CD8-positive, alpha-beta T cell (primary cell): ENCODE measurements at regions of chr11 and their contacts with region 1.

Region 1: DNA sequence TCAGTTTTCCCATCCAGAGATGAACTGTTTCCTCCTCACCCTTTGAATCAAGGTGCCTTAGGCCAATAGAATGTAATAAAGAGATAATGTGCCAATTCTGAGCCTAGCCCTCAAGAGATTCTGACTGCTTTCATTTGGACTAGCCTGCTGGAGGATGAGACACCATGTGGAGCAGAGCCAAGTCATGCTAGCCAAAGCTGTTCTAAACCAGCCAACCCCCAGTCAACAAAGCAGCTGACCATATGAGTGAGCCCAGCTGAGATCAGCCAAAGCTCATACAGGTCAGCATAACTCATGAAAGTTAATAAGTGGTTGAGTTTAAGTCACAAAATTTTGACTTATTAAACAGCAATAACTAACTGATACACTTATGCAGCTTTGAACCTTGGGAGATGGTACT is 66.7 kb upstream of the DBX1 start:
- DNase-seq: no peak
- ATAC-seq: no peak
- H3K4me3 ChIP-seq: no peak overlapping the region
- H3K4me3 Mint-ChIP-seq: no peak overlapping the region
- H3K27ac ChIP-seq: no peak overlapping the region
- H3K27ac Mint-ChIP-seq: no peak overlapping the region
- H3K4me1 ChIP-seq: no peaks in the 10 kb centered on the region
- H3K4me1 Mint-ChIP-seq: no peaks in the 10 kb centered on the region
- H3K27me3 ChIP-seq: no peaks in the 10 kb centered on the region
- H3K27me3 Mint-ChIP-seq: peaks cover 19% of the 10 kb centered on the region
- CTCF ChIP-seq: no peak

Region 2: DNA sequence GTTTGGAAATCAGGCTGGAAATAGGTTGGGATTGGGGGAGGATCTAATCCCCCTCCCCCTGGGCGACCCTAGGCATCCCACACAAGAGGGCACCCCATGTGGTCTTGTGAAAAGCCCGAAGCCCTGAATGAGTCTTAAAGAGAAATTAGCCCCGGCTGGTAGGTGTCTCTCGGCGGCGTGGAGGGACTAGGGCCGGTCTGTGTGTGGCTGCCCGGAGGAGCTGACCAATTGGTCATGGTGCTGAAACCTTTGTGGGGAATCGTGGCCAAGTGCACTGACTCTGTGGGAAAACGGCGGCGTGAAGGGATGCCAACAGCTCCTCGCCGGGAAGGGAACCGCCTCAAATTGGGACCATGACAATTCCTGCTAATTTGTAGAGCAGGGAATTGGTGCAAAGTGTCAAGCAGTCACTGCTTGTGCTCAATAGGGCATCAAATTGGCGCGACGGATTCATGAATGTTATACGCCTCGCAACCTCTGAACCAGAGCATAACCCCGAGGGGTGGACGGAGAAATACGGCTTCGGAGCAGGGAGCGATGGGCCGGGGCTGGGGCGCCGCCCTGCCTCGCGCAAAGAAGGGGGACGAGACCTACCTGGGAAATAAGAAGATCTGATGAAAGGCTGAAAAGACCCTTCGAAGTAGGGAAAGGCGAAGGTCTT is 68.2 kb before region 1 on chr11:
- CTCF ChIA-PET with region 1: no interaction called
- POLR2A ChIA-PET with region 1: no interaction called
- intact Hi-C with region 1: no loop called
- DNase-seq: peak in 1 of 9 experiments; percentile 11
- ATAC-seq: no peak
- H3K4me3 ChIP-seq: no peak overlapping the region
- H3K4me3 Mint-ChIP-seq: no peak overlapping the region
- H3K27ac ChIP-seq: no peak overlapping the region
- H3K27ac Mint-ChIP-seq: no peak overlapping the region
- H3K4me1 ChIP-seq: peaks cover 19% of the 10 kb centered on the region
- H3K4me1 Mint-ChIP-seq: peaks cover 34% of the 10 kb centered on the region
- H3K27me3 ChIP-seq: peaks cover 55 to 56% of the 10 kb centered on the region in 2 experiments
- H3K27me3 Mint-ChIP-seq: peaks cover 70% of the 10 kb centered on the region
- CTCF ChIP-seq: no peak

Region 3: GRCh38 chr11:20177136-20177535 is 49.8 kb before region 1 on chr11:
- CTCF ChIA-PET with region 1: no interaction called
- POLR2A ChIA-PET with region 1: no interaction called
- intact Hi-C with region 1: loop called in 1 of 2 experiments (anchors 10 kb)
- DNase-seq: no peak
- ATAC-seq: no peak
- H3K4me3 ChIP-seq: no peak overlapping the region
- H3K4me3 Mint-ChIP-seq: no peak overlapping the region
- H3K27ac ChIP-seq: no peak overlapping the region
- H3K27ac Mint-ChIP-seq: no peak overlapping the region
- H3K4me1 ChIP-seq: no peaks in the 10 kb centered on the region
- H3K4me1 Mint-ChIP-seq: no peaks in the 10 kb centered on the region
- H3K27me3 ChIP-seq: no peaks in the 10 kb centered on the region
- H3K27me3 Mint-ChIP-seq: peaks cover 37% of the 10 kb centered on the region
- CTCF ChIP-seq: no peak